Transverse colon (tissue), 4 donors: ENCODE measurements at regions of chr13 and their contacts with region 1.

Region 1: DNA sequence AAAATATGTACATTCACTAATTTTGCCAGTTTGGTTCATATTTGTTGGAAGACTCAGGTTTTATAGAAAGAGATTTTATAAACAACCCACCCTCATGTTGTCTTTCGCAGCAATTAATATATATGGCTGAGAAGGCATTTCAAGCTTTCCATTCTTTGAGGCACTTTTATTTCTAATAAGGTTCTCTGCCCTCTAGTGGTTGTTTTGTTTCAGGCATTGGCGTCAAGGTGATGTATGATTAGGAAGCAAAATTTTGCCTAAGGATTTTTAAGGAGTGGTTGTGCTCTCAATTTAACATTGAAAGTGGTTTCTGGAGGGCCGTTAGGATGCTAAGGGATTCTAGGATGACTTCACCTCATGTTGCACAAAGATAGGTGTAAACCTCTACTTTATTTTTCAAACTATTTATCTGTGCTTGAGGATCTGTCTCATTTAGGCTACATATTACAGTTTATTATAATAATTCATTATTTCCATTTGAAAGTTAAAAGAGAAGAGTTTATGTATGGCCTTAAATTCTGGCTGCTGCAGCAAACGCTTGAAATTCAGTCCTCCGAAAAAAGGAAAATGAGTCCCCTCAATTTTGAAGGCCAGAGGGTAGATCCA is 35.9 kb downstream of the OXGR1 start:
- DNase-seq: no peak
- H3K4me3 ChIP-seq: no peak overlapping the region
- H3K27ac ChIP-seq: no peak overlapping the region
- H3K4me1 ChIP-seq: no peaks in the 10 kb centered on the region
- H3K27me3 ChIP-seq: no peaks in the 10 kb centered on the region
- CTCF ChIP-seq: peak; percentile 54 to 76 (median 63)
- EP300 ChIP-seq: no peak
- POLR2A ChIP-seq: no peak

Region 2: GRCh38 chr13:96018135-96018534 is 940.3 kb before region 1 on chr13:
- in situ Hi-C with region 1: no loop called
- intact Hi-C with region 1: loop called (anchors 5 kb)
- DNase-seq: no peak
- H3K4me3 ChIP-seq: no peak overlapping the region
- H3K27ac ChIP-seq: no peak overlapping the region
- H3K4me1 ChIP-seq: peaks cover 0 to 18% (median 10%) of the 10 kb centered on the region in 4 donors
- H3K27me3 ChIP-seq: no peaks in the 10 kb centered on the region
- CTCF ChIP-seq: no peak
- EP300 ChIP-seq: no peak
- POLR2A ChIP-seq: no peak

Region 3: DNA sequence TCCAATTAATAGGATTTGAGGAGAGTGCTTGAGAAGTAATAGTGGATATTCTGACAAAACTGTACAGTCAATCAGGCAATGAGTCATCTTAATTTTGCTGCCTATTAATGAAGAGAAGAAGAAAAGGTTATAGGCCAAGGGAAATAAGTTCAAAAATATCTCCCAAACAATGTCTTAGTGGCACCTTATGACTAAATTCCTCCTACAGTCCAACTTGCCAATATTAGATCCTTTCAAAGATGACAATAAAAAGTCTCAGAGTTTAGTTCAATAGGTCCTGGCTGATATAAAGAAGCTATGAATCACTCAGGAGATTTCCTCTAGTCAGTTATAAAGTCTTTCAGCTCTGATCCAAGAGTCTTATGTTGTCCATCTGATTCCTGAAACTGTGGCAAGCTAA is 933.1 kb before region 1 on chr13:
- in situ Hi-C with region 1: loop called in 1 of 4 experiments (anchors 25 kb)
- intact Hi-C with region 1: no loop called
- DNase-seq: no peak
- H3K4me3 ChIP-seq: no peak overlapping the region
- H3K27ac ChIP-seq: no peak overlapping the region
- H3K4me1 ChIP-seq: peaks cover 0 to 13% (median 9%) of the 10 kb centered on the region in 4 donors
- H3K27me3 ChIP-seq: no peaks in the 10 kb centered on the region
- CTCF ChIP-seq: no peak
- EP300 ChIP-seq: no peak
- POLR2A ChIP-seq: no peak

Region 4: DNA sequence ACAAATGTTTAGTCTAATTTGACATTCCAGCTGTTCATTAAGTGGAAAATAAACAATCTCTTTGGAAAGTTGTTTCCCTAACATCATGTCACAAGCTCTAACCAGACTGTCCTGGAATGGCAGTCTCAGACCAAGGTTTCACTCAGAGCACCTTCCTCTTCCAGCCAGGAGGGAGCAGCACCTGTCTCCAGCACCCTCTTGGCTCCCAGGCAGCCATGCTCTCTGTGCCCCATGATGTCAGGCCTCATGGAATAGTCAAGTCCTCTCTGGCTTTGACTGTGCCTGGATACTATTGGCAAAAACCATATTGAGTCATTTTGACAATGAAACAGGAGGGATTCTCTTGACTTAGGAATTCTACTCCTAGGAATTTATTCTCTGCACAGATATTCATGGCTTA is 135.5 kb before region 1 on chr13:
- in situ Hi-C with region 1: loop called in 2 of 4 experiments (anchors 10 kb)
- intact Hi-C with region 1: no loop called
- DNase-seq: peak; percentile 25
- H3K4me3 ChIP-seq: no peak overlapping the region
- H3K27ac ChIP-seq: no peak overlapping the region
- H3K4me1 ChIP-seq: no peaks in the 10 kb centered on the region
- H3K27me3 ChIP-seq: no peaks in the 10 kb centered on the region
- CTCF ChIP-seq: peak; percentile 21 to 66 (median 41)
- EP300 ChIP-seq: no peak
- POLR2A ChIP-seq: no peak